AG04450 (cell line): ENCODE measurements at regions of chr5 and their contacts with region 1.

Region 1: DNA sequence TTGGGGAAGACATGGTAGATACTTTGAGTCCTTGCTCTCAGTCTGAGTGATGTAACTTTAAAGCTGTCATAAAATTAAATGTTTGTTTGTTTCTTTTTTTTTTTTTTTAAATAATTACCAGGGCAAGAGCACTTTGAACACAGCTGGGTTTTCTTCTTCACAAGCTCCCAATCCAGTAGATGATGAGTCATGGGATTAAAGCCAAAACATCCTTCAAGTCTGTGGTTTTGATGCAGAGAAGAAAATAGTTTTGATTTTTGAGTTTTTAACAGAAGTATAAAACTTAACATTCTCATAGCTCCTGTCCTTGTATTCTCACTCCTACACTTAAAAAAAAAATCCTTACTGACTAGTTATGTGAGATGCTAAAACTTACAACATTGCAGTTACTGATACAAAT is 34.8 kb upstream of the IL31RA start:
- DNase-seq: peak; percentile 88
- H3K4me3 ChIP-seq: no peak overlapping the region
- H3K27ac ChIP-seq: no peak overlapping the region
- H3K27me3 ChIP-seq: no peaks in the 10 kb centered on the region
- CTCF ChIP-seq: no peak

Region 2: GRCh38 chr5:54553659-54554207 is 1262.6 kb before region 1 on chr5:
- CTCF ChIA-PET with region 1: no interaction called
- POLR2A ChIA-PET with region 1: no interaction called
- DNase-seq: no peak
- H3K4me3 ChIP-seq: no peak overlapping the region
- H3K27ac ChIP-seq: no peak overlapping the region
- H3K27me3 ChIP-seq: no peaks in the 10 kb centered on the region
- CTCF ChIP-seq: no peak

Region 3: DNA sequence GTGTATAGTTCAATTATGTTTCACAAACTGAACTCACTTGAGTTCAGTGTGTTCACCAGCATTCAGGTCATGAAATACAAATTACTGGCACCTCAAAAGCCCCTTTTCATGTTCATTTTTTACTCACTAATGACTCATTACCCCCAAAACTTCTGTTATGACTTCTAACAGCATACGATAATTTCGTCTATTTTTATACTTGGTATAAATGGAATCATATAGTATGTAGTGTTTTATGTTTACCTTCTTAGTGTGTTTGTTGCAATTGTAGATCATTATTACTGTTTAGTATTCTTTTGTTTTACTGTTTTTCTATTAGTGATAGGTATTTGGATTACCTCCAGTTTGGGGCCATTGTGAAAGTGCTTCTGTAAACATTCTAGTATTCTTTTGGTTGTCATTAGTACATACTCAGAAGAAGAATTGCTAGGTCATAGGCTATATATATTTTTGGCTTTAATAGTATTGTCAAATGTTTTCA is 45.1 kb before region 1 on chr5:
- CTCF ChIA-PET with region 1: no interaction called
- POLR2A ChIA-PET with region 1: no interaction called
- DNase-seq: no peak
- H3K4me3 ChIP-seq: no peak overlapping the region
- H3K27ac ChIP-seq: no peak overlapping the region
- H3K27me3 ChIP-seq: no peaks in the 10 kb centered on the region
- CTCF ChIP-seq: no peak

Region 4: DNA sequence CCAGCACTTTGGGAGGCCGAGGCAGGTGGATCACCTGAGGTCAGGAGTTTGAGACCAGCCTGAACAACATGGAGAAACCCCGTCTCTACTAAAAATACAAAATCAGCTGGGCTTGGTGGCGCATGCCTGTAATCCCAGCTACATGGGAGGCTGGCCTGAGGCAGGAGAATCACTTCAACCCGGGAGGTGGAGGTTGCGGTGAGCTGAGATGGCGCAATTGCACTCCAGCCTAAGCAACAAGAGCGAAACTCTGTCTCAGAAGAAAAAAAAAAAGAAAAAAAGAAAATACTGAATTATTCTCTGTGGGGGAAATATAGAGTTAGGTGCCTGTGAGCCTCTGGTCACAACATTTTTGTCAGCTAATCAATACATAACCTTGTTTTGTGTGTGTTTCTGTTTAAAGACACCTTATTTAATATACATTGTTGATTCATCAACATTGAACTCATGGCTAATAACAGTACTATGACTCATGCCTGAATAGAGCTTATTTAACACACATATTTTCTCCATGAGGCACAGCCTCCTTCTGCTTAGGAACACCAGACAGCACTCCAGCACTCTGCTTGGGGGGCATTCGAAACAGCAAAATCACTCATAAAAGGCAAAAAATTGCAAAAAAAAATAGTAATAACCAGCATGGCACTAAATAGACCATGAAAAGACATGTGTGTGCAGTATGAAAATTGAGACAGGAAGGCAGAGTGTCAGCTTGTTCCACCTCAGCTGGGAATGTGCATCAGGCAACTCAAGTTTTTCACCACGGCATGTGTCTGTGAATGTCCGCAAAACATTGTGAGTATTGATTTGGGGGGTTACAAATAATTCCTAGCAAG is 34.7 kb after region 1 on chr5 and contains the start of gene IL31RA:
- CTCF ChIA-PET with region 1: no interaction called
- POLR2A ChIA-PET with region 1: interaction called, 11 read pairs
- DNase-seq: peak; percentile 53
- H3K4me3 ChIP-seq: no peak within 1 kb of the TSS; the same call in 1 of the 2 replicates
- H3K27ac ChIP-seq: peak within 1 kb of the TSS; percentile 55
- H3K27me3 ChIP-seq: no peaks in the 10 kb centered on the region
- CTCF ChIP-seq: no peak
- polyA plus RNA-seq, gene IL31RA: 1.5 and 1.9 TPM in 2 replicates

Region 5: DNA sequence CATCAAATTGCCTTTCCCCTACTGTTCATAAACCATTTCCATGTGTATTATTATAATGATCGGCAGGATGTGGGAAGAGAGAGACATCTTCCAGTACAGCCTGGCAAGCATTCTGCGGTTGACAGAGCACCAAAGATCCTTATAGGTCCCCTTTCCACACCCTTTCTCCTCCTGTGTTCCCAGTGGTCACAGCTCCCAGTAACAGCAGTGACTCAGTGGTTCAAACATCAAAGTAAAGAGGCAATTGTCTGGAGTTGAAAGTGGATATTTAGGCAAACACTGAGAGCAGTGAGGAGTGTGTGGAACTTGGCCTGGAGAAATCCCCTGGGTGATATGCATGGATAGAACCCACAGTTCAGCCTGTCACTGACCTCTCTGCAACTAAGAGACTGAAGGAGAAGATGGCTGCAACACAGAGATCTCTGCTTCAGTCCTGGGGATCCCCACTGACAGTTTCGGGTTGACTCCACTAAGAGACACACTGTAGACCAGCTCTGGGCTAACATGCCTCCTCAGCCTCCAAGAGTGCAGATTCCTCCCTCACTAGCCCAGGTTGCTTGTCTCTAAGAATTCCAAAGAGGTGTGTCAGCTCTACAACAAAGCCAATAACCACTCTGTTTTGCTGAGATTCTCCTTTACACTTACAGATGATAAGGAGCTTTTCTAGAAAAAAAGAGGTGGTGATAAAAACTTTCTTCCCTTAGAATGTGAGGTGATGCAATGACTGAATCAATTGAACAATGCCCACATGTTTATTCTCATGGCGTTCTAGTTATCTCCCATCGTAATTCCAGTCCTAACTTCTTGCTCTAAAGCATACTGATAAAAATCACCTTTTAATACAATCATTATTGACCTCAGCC is 272.9 kb after region 1 on chr5:
- CTCF ChIA-PET with region 1: no interaction called
- POLR2A ChIA-PET with region 1: no interaction called
- DNase-seq: peak; percentile 21
- H3K4me3 ChIP-seq: no peak overlapping the region
- H3K27ac ChIP-seq: peak overlapping the region; percentile 31
- H3K27me3 ChIP-seq: no peaks in the 10 kb centered on the region
- CTCF ChIP-seq: no peak